GM10248 (cell line): ENCODE measurements at regions of chr11 and their contacts with region 1.

Region 1: GRCh38 chr11:36724742-36725385 is 126.8 kb upstream of the RAG2 start:
- DNase-seq: peak; percentile 22
- CTCF ChIP-seq: no peak

Region 2: DNA sequence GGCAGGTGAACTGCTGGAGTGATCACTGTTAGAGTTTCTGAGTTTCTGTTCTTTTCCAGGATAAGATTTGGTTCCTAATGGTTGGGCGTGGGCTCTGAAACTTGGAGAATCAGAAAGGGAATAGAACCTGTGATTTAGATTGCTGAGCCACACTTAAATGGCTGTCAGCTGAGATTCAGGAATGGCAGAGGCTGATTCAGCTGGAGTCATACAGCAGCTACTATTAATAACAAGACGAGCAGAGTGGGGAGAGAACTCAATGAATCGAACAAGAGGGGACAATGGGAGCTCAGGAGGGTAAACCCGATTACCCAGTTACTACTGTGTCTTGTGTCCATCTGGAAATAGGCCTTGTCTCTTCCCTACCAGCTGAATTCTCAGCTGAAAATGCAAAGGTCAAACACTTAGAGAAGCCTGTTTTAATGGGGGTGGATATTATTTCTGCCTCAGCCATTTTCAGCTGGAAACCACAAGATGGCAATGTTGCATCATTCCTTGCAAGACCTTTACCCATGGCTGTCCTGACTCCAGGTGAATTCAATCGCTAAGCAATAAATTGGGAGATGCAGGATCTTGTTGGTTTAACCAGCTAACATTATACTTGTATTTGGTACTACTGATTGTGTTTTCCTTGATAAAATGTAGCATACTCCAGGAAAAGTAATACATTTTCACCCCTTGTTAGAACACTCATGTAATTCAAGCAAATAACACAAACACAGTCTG is 22.4 kb before region 1 on chr11:
- CTCF ChIA-PET with region 1: interaction called, 15 read pairs
- POLR2A ChIA-PET with region 1: no interaction called
- DNase-seq: peak; percentile 57
- CTCF ChIP-seq: peak; percentile 77

Region 3: DNA sequence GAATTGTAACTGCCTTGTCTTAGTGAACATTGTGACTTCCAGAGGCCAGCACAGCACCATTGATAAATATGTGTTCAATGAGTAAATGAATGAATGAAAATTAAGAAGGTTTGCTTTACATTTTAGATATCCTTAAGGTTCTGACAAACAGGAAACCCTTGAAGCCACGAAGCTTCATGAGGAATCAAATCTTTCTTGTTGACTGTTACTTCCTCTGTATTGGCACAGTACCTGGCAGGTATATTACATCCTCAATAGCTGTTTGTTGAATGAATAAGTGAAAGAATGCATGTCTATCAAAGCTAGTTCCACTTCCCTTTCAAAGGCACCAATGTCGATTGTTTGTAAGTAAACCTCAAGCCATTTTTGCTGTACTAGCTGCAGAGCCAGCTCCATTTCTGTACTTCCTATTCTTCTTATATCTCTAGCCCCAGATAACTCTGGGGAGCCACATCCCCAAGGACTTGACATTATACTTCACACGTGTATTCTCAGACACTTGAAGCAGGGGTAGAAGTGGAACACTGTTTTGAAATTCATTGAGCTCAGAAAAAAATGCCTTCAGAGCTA is 13.5 kb after region 1 on chr11:
- CTCF ChIA-PET with region 1: interaction called, 349 read pairs
- POLR2A ChIA-PET with region 1: no interaction called
- DNase-seq: no peak
- CTCF ChIP-seq: no peak

Region 4: DNA sequence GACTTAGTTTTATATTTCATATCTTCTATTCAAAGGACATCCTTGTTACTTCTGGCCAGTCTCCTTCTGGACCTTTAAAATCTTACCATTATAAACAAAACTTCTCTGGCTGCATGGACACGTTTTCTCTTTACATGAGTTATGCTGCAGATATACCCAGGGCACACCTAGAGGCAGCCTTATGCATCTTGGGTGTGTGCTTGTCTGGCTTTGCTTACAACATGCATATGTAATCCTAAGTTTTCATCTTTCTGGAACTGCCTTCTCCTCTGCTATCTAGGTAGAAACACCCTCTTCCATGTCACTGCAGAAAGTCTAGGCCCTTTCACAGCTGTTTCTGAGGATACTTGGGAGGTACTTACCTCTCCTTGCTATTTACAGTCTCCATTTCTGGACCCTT is 58.9 kb after region 1 on chr11:
- CTCF ChIA-PET with region 1: no interaction called
- POLR2A ChIA-PET with region 1: no interaction called
- DNase-seq: no peak
- CTCF ChIP-seq: no peak